Posterior vena cava (tissue), 2 donors: ENCODE measurements at regions of chr10 and their contacts with region 1.

Region 1: DNA sequence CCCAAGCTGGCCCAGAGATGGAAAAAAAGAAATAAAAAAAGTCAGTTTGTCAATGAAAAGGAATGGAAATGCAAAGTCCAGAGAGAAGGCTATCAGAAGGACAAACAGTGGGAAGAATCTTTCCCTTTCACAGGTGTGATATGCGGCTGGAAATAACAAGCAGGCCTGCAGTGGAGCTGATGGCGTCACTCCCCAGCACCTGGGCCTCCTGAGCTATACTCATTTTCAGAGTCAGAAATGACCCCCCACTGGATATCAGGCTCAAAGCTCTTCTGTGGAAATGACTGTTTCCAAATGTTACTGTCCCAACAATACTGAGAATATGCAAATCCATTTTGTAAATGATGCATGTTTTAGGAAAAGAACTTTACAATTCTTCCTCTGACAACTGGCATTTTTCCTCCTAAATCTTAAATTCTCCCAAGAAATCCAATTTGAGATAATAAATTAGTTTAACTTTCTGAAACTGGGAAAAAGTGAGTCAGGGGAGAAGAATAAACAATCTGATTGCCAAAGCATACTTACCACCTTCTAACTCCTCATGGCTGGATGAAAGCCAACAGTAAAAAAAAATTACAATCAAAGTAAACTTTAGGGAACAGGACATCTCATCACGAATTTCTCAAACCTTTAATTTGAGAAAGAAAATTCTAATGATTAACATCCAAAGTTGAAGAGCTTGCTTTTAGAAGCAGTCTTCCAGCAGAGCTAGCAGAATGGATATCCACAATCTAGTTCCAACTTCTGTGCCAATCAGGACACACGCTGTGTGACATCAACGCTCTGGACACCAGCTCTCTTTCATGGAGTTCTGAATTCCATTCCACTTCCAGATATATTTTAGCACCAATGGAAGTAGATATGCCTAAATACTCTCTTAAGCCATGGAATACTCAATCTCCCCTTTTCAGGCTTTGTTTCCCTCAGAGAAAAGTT is 5.3 kb upstream of the CUZD1 start:
- DNase-seq: no peak

Region 2: DNA sequence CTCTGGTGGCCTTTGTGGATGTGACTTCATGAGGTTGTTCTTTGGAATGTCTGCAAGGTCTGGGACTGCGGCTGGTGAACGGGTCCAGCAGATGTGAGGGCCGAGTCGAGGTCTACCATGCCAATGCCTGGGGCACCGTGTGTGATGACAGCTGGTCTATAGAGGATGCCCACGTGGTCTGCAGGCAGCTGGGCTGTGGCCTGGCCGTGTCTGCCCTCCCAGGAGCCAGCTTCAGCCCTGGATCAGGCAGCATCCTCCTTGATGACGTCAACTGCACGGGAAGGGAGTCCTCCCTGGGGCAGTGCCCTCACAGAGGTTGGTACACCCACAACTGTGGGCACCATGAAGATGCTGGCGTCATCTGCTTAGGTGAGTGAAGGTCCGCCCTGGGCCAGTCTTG is 52.2 kb before region 1 on chr10:
- intact Hi-C with region 1: loop called in 1 of 2 experiments (anchors 2 kb)
- DNase-seq: no peak